Common myeloid progenitor, CD34-positive (primary cell): ENCODE measurements at regions of chr6 and their contacts with region 1.

Region 1: GRCh38 chr6:125153391-125154117 is at the start of gene TPD52L1:
- DNase-seq: peak; percentile 72 to 85 (median 79)
- H3K4me3 ChIP-seq: peak within 1 kb of the TSS; percentile 44 to 86 (median 76)
- H3K27ac ChIP-seq: peak within 1 kb of the TSS in 1 of 2 experiments; percentile 51
- H3K4me1 ChIP-seq: peaks cover 0 to 16% (median 16%) of the 10 kb centered on the region in 4 experiments
- H3K27me3 ChIP-seq: peaks cover 0 to 4% (median 2%) of the 10 kb centered on the region in 5 experiments

Region 2: GRCh38 chr6:125136378-125136777 is 17.2 kb before region 1 on chr6:
- CTCF ChIA-PET with region 1: no interaction called
- POLR2A ChIA-PET with region 1: no interaction called
- DNase-seq: no peak
- H3K4me3 ChIP-seq: no peak overlapping the region
- H3K27ac ChIP-seq: no peak overlapping the region
- H3K4me1 ChIP-seq: no peaks in the 10 kb centered on the region
- H3K27me3 ChIP-seq: no peaks in the 10 kb centered on the region

Region 3: GRCh38 chr6:125170376-125170775 is 16.8 kb after region 1 on chr6:
- CTCF ChIA-PET with region 1: interaction called, 20 read pairs
- POLR2A ChIA-PET with region 1: no interaction called
- DNase-seq: no peak
- H3K4me3 ChIP-seq: no peak overlapping the region
- H3K27ac ChIP-seq: no peak overlapping the region
- H3K4me1 ChIP-seq: peaks cover 0 to 6% (median 0%) of the 10 kb centered on the region in 4 experiments
- H3K27me3 ChIP-seq: no peaks in the 10 kb centered on the region